ENCODE measurements at regions of chr15 and their contacts with region 1.

Region 1: GRCh38 chr15:90059208-90059985 is 42.9 kb downstream of the IDH2 start:
- DNase-seq: peak in 1 of 2 experiments; percentile 64
- H3K4me3 ChIP-seq: peak overlapping the region in 1 of 4 experiments; percentile 19; a peak in 1 of 8 replicates
- H3K27ac ChIP-seq: peak overlapping the region; percentile 69
- H3K4me1 ChIP-seq: peaks cover 8 to 50% (median 36%) of the 10 kb centered on the region in 4 experiments
- H3K27me3 ChIP-seq: no peaks in the 10 kb centered on the region
- CTCF ChIP-seq: no peak
- EP300 ChIP-seq: no peak; a peak in 1 of 3 replicates
- POLR2A ChIP-seq: peak in 1 of 2 experiments; percentile 30; a peak in 1 of 3 replicates
- RAD21 ChIP-seq: peak in 1 of 2 experiments; percentile 8; a peak in 1 of 4 replicates

Region 2: GRCh38 chr15:90009301-90010022 is 49.9 kb before region 1 on chr15:
- CTCF ChIA-PET with region 1: no interaction called
- POLR2A ChIA-PET with region 1: no interaction called
- DNase-seq: no peak
- H3K4me3 ChIP-seq: no peak overlapping the region
- H3K27ac ChIP-seq: no peak overlapping the region
- H3K4me1 ChIP-seq: peaks cover 4 to 21% (median 13%) of the 10 kb centered on the region in 4 experiments
- H3K27me3 ChIP-seq: no peaks in the 10 kb centered on the region; a peak in 2 of 7 replicates
- CTCF ChIP-seq: no peak
- EP300 ChIP-seq: no peak
- POLR2A ChIP-seq: no peak
- RAD21 ChIP-seq: no peak

Region 3: DNA sequence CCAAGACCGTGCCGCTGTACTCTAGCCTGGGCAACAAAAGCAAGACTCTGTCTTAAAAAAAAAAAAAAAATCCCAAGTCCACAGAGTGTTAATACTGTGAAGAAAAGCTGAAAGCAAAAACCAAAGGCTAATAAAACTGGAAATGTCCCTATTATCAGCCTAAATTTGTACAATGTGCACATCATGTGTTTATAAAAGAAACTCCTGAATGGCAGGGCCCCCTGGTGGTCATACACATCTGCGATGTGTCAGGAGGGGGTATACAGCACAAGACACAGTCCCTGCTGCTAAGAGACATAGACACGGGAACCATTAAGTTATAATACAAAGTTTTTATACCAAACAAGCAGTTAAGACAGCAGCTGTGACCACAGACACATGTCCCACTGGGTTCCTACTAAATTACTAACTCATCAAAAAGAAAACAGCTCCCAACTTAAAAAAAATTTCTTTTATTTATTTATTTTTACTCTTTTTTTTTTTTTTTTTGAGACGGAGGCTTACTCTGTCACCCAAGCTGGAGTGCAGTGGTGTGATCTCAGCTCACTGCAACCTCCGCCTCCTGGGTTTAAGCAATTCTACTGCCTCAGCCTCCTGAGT is 11.9 kb after region 1 on chr15:
- CTCF ChIA-PET with region 1: interaction called, 13 read pairs
- POLR2A ChIA-PET with region 1: interaction called, 5 read pairs
- DNase-seq: no peak
- H3K4me3 ChIP-seq: no peak overlapping the region
- H3K27ac ChIP-seq: no peak overlapping the region
- H3K4me1 ChIP-seq: peaks cover 2 to 6% (median 5%) of the 10 kb centered on the region in 4 experiments; a peak in 5 of 7 replicates
- H3K27me3 ChIP-seq: no peaks in the 10 kb centered on the region
- CTCF ChIP-seq: peak; percentile 44 to 57 (median 54)
- EP300 ChIP-seq: no peak
- POLR2A ChIP-seq: no peak
- RAD21 ChIP-seq: peak; percentile 49 to 65